Naive thymus-derived CD4-positive, alpha-beta T cell (primary cell): ENCODE measurements at regions of chr11 and their contacts with region 1.

Region 1: DNA sequence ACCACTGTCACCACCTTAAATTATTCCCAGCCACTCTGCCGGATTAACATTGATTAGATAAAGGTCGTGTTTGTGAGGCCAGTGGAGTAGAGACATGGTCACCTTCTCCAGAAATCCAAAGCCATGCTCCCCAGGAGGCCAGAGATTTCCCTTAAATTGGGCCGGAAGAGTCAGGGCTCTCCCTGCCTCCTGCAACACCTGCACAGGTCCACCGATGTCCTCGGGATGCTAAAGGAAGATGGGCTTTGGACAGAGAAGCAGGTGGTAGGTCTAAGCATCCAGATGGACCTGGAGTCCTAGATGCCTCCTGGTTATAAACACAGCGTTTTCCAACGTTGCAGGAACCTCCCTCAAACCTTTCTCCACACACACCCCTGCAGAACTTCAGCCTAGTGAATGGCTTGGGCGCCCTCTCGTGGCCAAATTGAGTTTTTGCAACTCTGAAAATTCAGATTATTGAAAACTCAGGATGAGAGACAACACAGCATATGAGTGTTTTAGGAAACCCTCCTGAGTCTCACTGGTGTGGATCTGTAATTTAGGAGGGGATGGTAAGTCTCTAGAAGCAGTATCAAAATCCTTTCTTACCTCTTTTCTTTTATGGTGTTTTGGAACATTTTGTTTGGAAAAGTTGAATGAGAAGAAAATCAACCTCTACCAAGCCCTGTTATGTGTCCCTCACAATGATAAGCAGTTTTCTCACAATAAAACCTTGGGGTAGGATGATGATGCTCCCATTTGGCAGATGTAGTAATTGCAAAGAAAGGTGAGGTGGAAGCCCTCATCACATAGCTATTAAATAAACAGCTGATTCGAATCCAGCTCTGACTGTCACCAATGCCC is 109.6 kb downstream of the RRAS2 start:
- DNase-seq: peak; percentile 42 to 77 (median 62)
- ATAC-seq: peak; percentile 75
- H3K4me3 ChIP-seq: peak overlapping the region; percentile 31
- H3K4me3 Mint-ChIP-seq: peak overlapping the region; percentile 46 to 77 (median 72)
- H3K27ac ChIP-seq: no peak overlapping the region
- H3K27ac Mint-ChIP-seq: peak overlapping the region in 2 of 9 donors; percentile 71 to 80
- H3K4me1 ChIP-seq: peaks cover 12 to 13% of the 10 kb centered on the region in 2 donors
- H3K4me1 Mint-ChIP-seq: peaks cover 13 to 28% (median 24%) of the 10 kb centered on the region in 7 donors
- H3K27me3 ChIP-seq: no peaks in the 10 kb centered on the region
- H3K27me3 Mint-ChIP-seq: peaks cover 0 to 22% (median 0%) of the 10 kb centered on the region in 5 donors

Region 2: GRCh38 chr11:13486926-13487660 is 762.2 kb before region 1 on chr11:
- CTCF ChIA-PET with region 1: interaction called, 6 read pairs
- POLR2A ChIA-PET with region 1: no interaction called
- intact Hi-C with region 1: loop called (anchors 1 kb)
- DNase-seq: peak; percentile 28 to 64 (median 55)
- ATAC-seq: peak; percentile 92
- H3K4me3 ChIP-seq: peak overlapping the region; percentile 61
- H3K4me3 Mint-ChIP-seq: peak overlapping the region; percentile 66 to 90 (median 76)
- H3K27ac ChIP-seq: no peak overlapping the region
- H3K27ac Mint-ChIP-seq: peak overlapping the region in 6 of 9 donors; percentile 40 to 77 (median 74)
- H3K4me1 ChIP-seq: peaks cover 0 to 4% of the 10 kb centered on the region in 2 donors
- H3K4me1 Mint-ChIP-seq: peaks cover 5 to 7% (median 6%) of the 10 kb centered on the region in 7 donors
- H3K27me3 ChIP-seq: no peaks in the 10 kb centered on the region
- H3K27me3 Mint-ChIP-seq: peaks cover 2 to 12% (median 4%) of the 10 kb centered on the region in 5 donors

Region 3: GRCh38 chr11:13861411-13861810 is 387.9 kb before region 1 on chr11:
- CTCF ChIA-PET with region 1: interaction called, 3 read pairs
- POLR2A ChIA-PET with region 1: no interaction called
- intact Hi-C with region 1: loop called in 1 of 2 experiments (anchors 1 kb)
- DNase-seq: peak in 4 of 9 donors; percentile 11 to 19 (median 14)
- ATAC-seq: no peak
- H3K4me3 ChIP-seq: no peak overlapping the region
- H3K4me3 Mint-ChIP-seq: peak overlapping the region in 7 of 10 donors; percentile 6 to 66 (median 55)
- H3K27ac ChIP-seq: no peak overlapping the region
- H3K27ac Mint-ChIP-seq: peak overlapping the region in 8 of 9 donors; percentile 33 to 98 (median 71)
- H3K4me1 ChIP-seq: peaks cover 6 to 19% of the 10 kb centered on the region in 2 donors
- H3K4me1 Mint-ChIP-seq: peaks cover 20 to 33% (median 25%) of the 10 kb centered on the region in 7 donors
- H3K27me3 ChIP-seq: no peaks in the 10 kb centered on the region
- H3K27me3 Mint-ChIP-seq: no peaks in the 10 kb centered on the region

Region 4: DNA sequence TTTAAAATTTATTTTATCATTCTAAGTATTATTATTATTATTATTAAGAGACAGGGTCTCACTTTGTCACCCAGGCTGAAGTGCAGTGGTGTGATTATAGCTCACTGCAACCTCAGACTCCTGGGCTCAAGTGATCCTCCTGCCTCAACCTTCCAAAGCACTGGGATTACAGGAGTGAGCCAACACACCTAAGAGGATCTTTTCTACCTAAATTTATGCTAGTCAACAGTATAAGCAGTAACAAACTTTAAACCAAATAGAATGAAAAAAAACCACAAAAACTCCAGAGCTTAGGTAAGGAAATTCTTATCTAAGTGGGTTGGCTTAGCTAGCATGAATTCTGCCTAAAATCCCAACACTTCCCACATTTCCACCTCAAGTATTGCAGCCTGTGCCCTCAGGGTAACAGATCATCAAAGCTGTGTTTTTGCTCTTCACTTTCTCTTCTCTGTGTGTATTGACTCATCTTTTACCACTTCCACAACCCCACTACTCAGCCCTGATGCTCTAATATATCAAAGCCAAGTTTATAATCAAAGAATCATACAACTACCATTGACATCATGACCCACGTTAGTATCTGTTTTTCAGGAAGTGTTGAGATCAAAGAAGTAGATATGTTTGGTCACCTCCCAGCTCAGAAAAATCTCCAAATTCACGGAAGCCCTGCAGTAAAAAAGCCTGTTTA is 380.5 kb before region 1 on chr11:
- CTCF ChIA-PET with region 1: no interaction called
- POLR2A ChIA-PET with region 1: no interaction called
- intact Hi-C with region 1: loop called in 1 of 2 experiments (anchors 2 kb)
- DNase-seq: peak in 7 of 9 donors; percentile 73 to 92 (median 88)
- ATAC-seq: peak; percentile 96
- H3K4me3 ChIP-seq: no peak overlapping the region
- H3K4me3 Mint-ChIP-seq: peak overlapping the region in 9 of 10 donors; percentile 2 to 70 (median 40)
- H3K27ac ChIP-seq: peak overlapping the region; percentile 87
- H3K27ac Mint-ChIP-seq: peak overlapping the region; percentile 86 to 97 (median 92)
- H3K4me1 ChIP-seq: peaks cover 9 to 19% of the 10 kb centered on the region in 2 donors
- H3K4me1 Mint-ChIP-seq: peaks cover 19 to 56% (median 43%) of the 10 kb centered on the region in 7 donors
- H3K27me3 ChIP-seq: no peaks in the 10 kb centered on the region
- H3K27me3 Mint-ChIP-seq: peaks cover 0 to 14% (median 0%) of the 10 kb centered on the region in 5 donors

Region 5: GRCh38 chr11:14148653-14149273 is 100.6 kb before region 1 on chr11:
- CTCF ChIA-PET with region 1: interaction called, 14 read pairs
- POLR2A ChIA-PET with region 1: no interaction called
- intact Hi-C with region 1: loop called (anchors 1 kb)
- DNase-seq: peak in 7 of 9 donors; percentile 26 to 66 (median 46)
- ATAC-seq: peak; percentile 75
- H3K4me3 ChIP-seq: no peak overlapping the region
- H3K4me3 Mint-ChIP-seq: no peak overlapping the region
- H3K27ac ChIP-seq: no peak overlapping the region
- H3K27ac Mint-ChIP-seq: peak overlapping the region in 1 of 9 donors; percentile 74
- H3K4me1 ChIP-seq: no peaks in the 10 kb centered on the region
- H3K4me1 Mint-ChIP-seq: peaks cover 0 to 5% (median 4%) of the 10 kb centered on the region in 7 donors
- H3K27me3 ChIP-seq: no peaks in the 10 kb centered on the region
- H3K27me3 Mint-ChIP-seq: peaks cover 0 to 20% (median 0%) of the 10 kb centered on the region in 5 donors

Region 6: DNA sequence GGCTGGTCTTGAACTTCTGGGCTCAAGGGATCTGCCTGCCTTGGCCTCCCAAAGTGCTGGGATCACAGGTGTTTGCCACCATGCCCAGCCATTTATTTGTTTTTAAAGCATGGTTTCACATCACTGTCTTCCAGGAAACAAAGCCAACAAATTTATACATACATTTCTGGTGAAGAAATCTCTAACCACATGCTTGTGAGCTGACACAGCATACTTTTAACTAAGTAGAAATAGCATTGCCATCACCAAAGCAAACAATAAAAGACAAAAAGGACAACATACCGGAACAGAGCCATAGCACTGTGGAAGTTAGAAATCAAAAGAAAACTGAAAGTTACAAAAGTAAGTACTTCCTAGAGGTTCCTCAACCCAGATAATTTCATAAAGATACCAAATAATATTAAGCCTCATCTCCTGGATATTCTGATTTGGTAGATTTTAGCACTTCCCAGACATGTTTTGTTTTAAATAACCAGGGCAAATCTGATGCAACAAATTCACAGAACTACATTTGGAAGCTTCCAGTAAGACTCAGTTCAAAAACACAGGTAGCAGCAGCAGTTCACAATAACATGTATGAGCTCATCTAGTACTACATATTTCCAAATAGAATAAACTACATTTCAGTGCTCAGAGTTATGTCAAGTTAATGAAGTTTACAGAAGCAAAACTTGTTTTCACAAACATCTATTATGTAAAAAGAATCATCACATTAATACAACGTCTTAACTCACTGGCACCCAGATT is 39.0 kb after region 1 on chr11:
- CTCF ChIA-PET with region 1: no interaction called
- POLR2A ChIA-PET with region 1: no interaction called
- intact Hi-C with region 1: no loop called
- DNase-seq: no peak
- ATAC-seq: no peak
- H3K4me3 ChIP-seq: no peak overlapping the region
- H3K4me3 Mint-ChIP-seq: peak overlapping the region in 2 of 10 donors; percentile 54 to 62
- H3K27ac ChIP-seq: no peak overlapping the region
- H3K27ac Mint-ChIP-seq: peak overlapping the region in 1 of 9 donors; percentile 87
- H3K4me1 ChIP-seq: no peaks in the 10 kb centered on the region
- H3K4me1 Mint-ChIP-seq: peaks cover 0 to 34% (median 2%) of the 10 kb centered on the region in 7 donors
- H3K27me3 ChIP-seq: no peaks in the 10 kb centered on the region
- H3K27me3 Mint-ChIP-seq: no peaks in the 10 kb centered on the region

Region 7: GRCh38 chr11:14454861-14455632 is 205.7 kb after region 1 on chr11:
- CTCF ChIA-PET with region 1: no interaction called
- POLR2A ChIA-PET with region 1: no interaction called
- intact Hi-C with region 1: loop called in 1 of 2 experiments (anchors 1 kb)
- DNase-seq: peak in 5 of 9 donors; percentile 4 to 22 (median 12)
- ATAC-seq: peak; percentile 67
- H3K4me3 ChIP-seq: no peak overlapping the region
- H3K4me3 Mint-ChIP-seq: no peak overlapping the region
- H3K27ac ChIP-seq: no peak overlapping the region
- H3K27ac Mint-ChIP-seq: peak overlapping the region in 4 of 9 donors; percentile 1 to 52 (median 46)
- H3K4me1 ChIP-seq: peaks cover 0 to 3% of the 10 kb centered on the region in 2 donors
- H3K4me1 Mint-ChIP-seq: peaks cover 0 to 10% (median 0%) of the 10 kb centered on the region in 7 donors
- H3K27me3 ChIP-seq: no peaks in the 10 kb centered on the region
- H3K27me3 Mint-ChIP-seq: no peaks in the 10 kb centered on the region